ENCODE measurements at regions of chr2 and their contacts with region 1.

Region 1: DNA sequence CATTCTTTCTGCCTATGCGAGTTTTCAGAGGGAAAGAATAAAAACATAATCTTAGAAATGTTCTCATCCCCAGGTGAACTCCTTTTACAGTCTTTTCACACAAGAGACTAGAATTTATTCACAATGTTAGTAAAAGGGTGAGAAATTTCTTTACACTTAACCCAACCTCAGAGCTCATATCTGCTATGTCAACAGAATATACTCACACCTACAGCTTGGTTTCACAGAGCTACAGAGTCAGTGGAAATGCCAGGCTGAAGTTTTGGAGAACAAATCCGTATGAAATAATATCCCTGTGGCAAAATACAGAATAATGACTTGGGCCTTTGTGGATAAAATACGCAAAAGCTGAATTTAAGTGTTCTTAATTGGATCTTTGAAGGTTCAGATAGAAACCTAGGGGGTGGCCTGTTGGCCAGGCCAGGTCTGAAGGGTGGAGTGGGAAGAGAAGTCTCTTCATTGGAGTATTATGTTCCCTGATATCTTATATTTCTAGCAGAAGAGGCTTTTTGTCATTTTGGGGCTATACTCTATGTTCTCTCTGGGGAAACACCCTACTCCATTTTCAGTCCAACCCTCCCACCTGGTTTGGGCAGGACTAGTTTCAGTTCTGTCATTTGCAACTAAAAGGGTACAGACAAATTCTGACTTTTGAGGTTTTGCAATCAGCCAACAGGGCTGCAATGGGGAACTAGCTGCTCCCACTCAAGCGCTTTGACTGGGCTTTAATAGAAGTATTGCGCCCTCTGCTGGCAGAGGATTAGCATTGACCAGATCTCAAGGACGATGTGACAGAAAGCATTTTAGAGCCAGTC is 25.7 kb downstream of the FBXO48 start:
- DNase-seq: peak; percentile 89
- H3K4me3 Mint-ChIP-seq: no peak overlapping the region
- H3K27ac Mint-ChIP-seq: peak overlapping the region; percentile 73
- H3K4me1 Mint-ChIP-seq: peaks cover 14% of the 10 kb centered on the region
- H3K27me3 Mint-ChIP-seq: no peaks in the 10 kb centered on the region

Region 2: GRCh38 chr2:68121873-68122679 is 319.3 kb before region 1 on chr2:
- CTCF ChIA-PET with region 1: interaction called, 19 read pairs
- POLR2A ChIA-PET with region 1: no interaction called
- intact Hi-C with region 1: loop called (anchors 1 kb)
- DNase-seq: peak; percentile 82
- H3K4me3 Mint-ChIP-seq: no peak overlapping the region
- H3K27ac Mint-ChIP-seq: no peak overlapping the region
- H3K4me1 Mint-ChIP-seq: no peaks in the 10 kb centered on the region
- H3K27me3 Mint-ChIP-seq: no peaks in the 10 kb centered on the region

Region 3: GRCh38 chr2:68251187-68251854 is 190.1 kb before region 1 on chr2:
- CTCF ChIA-PET with region 1: interaction called, 9 read pairs
- POLR2A ChIA-PET with region 1: no interaction called
- intact Hi-C with region 1: loop called (anchors 1 kb)
- DNase-seq: peak; percentile 86
- H3K4me3 Mint-ChIP-seq: peak overlapping the region; percentile 86
- H3K27ac Mint-ChIP-seq: peak overlapping the region; percentile 97
- H3K4me1 Mint-ChIP-seq: peaks cover 35% of the 10 kb centered on the region
- H3K27me3 Mint-ChIP-seq: no peaks in the 10 kb centered on the region

Region 4: DNA sequence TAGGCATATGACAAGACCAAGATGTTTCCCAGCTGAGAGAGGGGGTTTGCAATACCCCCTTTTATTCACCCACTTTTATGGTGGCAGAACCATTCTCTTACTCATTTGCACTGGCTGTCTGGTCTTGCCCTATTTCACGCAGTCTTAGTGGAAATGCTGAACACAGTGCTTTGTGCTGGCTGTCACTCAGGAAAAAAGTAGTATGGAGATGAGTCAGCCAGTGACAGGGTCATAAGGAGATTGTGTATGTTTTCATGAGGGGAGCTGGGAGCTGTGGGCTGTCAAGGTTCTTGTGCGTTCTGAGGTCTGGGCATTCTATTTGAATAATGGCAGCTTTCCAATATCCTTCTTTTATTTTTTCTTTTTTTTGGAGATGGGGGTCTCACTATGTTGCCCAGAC is 110.7 kb before region 1 on chr2:
- CTCF ChIA-PET with region 1: interaction called, 17 read pairs
- POLR2A ChIA-PET with region 1: no interaction called
- intact Hi-C with region 1: no loop called
- DNase-seq: no peak
- H3K4me3 Mint-ChIP-seq: no peak overlapping the region
- H3K27ac Mint-ChIP-seq: no peak overlapping the region
- H3K4me1 Mint-ChIP-seq: no peaks in the 10 kb centered on the region
- H3K27me3 Mint-ChIP-seq: peaks cover 16% of the 10 kb centered on the region

Region 5: DNA sequence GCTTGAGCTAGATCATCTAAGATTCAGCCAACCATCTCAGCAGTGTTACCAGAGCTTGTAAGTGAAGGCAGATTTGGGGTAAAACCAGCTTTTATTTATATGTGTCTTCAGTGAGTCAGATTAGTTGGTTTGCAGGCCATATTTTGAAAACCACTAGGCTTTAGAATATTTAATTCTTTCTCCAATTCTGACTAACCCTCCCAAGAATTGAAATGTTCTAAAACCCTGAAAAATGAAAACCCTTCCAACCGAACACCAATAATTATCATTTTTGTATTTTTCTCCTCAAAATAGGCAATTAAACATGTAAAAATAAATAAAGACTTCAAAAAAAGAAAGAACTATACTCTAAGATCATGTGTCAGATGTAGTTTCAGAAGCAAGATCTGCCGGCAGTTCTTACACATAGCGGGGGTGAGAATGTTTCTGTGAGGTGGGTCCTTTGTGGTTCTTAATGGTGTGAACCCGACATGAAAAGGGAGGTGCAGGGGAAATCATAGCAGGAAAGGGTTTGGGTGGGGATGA is 62.1 kb before region 1 on chr2:
- CTCF ChIA-PET with region 1: interaction called, 11 read pairs
- POLR2A ChIA-PET with region 1: no interaction called
- intact Hi-C with region 1: no loop called
- DNase-seq: peak; percentile 54
- H3K4me3 Mint-ChIP-seq: no peak overlapping the region
- H3K27ac Mint-ChIP-seq: no peak overlapping the region
- H3K4me1 Mint-ChIP-seq: peaks cover 20% of the 10 kb centered on the region
- H3K27me3 Mint-ChIP-seq: peaks cover 5% of the 10 kb centered on the region

Region 6: DNA sequence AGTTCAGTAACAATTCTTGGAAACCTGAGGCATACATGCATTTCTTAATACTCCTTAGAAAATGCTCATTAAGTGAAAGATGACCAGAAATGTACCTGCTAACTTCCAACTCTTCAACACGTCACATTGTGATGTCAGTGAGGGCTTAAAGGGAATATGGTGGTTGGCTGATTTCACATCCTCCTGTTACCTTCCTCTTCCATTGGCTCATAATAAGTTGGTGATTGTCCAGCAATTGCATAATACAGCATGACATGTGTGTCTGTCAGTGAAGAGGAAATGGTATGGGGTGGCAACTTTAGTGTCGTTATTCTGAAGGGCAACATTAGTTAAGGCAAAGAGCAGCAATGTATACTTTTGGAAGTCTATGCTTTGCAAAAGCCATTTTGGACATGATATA is 50.3 kb before region 1 on chr2:
- CTCF ChIA-PET with region 1: interaction called, 11 read pairs
- POLR2A ChIA-PET with region 1: no interaction called
- intact Hi-C with region 1: loop called (anchors 1 kb)
- DNase-seq: no peak
- H3K4me3 Mint-ChIP-seq: no peak overlapping the region
- H3K27ac Mint-ChIP-seq: no peak overlapping the region
- H3K4me1 Mint-ChIP-seq: peaks cover 30% of the 10 kb centered on the region
- H3K27me3 Mint-ChIP-seq: no peaks in the 10 kb centered on the region

Region 7: DNA sequence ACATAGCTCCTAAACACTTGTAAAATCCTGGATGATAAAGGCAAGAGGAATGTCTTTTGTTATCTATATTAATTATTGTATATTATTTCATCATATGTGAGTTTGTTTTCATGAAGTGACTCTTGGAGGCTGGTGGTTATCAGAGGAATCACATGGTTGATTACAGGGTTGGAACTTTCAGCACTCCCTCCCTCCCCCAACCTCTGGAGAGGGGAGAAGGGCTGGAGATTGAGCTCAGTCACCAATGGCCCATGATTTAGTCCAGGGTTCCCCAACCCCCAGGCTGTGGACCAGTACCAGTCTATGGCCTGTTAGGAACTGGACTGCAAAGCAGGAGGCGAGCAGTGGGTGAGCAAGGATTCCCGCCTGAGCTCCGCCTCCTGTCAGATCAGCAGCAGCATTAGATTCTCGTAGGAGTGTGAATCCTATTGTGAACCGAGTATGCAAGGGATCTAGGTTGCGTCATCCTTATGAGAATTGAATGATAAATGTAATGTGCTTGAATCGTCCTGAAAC is 12.0 kb before region 1 on chr2:
- CTCF ChIA-PET with region 1: interaction called, 20 read pairs
- POLR2A ChIA-PET with region 1: no interaction called
- intact Hi-C with region 1: loop called (anchors 1 kb)
- DNase-seq: no peak
- H3K4me3 Mint-ChIP-seq: no peak overlapping the region
- H3K27ac Mint-ChIP-seq: no peak overlapping the region
- H3K4me1 Mint-ChIP-seq: peaks cover 16% of the 10 kb centered on the region
- H3K27me3 Mint-ChIP-seq: no peaks in the 10 kb centered on the region